Heart right ventricle (tissue), 16 donors: ENCODE measurements at regions of chr10 and their contacts with region 1.

Region 1: DNA sequence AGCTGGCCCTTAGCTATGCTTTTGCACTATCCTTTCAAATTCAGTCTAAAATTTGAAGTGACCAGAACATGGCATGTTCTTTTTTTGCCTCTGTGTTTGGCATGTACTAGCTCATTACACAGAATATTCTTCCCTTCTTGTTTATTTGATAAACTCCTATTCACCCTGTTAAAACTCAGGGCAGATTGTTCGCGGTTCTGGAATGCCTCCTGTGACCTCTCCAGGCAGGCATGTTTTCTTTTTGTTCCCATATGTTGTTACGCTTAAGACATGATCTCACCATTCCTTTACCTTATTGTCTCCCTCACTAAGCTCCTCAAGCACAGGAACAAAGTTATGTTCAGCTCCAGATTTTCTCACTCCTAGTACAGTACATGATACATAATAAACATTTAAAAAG is 181.7 kb downstream of the CCSER2 start:
- DNase-seq: no peak
- ATAC-seq: no peak
- H3K4me3 ChIP-seq: no peak overlapping the region
- H3K27ac ChIP-seq: no peak overlapping the region
- H3K4me1 ChIP-seq: no peaks in the 10 kb centered on the region
- H3K27me3 ChIP-seq: no peaks in the 10 kb centered on the region
- CTCF ChIP-seq: no peak

Region 2: GRCh38 chr10:84452003-84452402 is 58.1 kb before region 1 on chr10:
- intact Hi-C with region 1: loop called in 1 of 10 experiments (anchors 10 kb)
- DNase-seq: no peak
- ATAC-seq: no peak
- H3K4me3 ChIP-seq: no peak overlapping the region
- H3K27ac ChIP-seq: no peak overlapping the region
- H3K4me1 ChIP-seq: peaks cover 0 to 15% (median 0%) of the 10 kb centered on the region in 9 donors
- H3K27me3 ChIP-seq: no peaks in the 10 kb centered on the region
- CTCF ChIP-seq: no peak

Region 3: DNA sequence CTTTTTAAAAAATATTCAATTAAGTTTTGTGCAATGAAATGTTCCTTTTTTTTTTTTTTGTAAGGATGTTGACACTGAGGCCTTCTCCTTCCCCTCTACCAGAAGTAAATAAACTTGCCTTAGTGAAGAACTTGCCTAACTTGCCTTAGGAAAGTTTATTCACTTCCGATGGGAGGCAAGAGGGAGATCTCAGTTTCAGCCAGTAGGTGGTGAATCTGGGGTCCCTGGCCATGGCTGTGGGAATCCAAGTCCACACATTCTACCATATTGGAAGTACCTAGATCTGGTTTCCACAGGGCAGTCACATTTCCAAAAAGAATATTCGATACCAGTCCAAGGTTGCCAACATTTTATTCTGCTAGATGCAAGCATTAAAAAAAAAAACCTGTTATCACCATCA is 89.1 kb after region 1 on chr10:
- intact Hi-C with region 1: no loop called
- DNase-seq: no peak
- ATAC-seq: no peak
- H3K4me3 ChIP-seq: no peak overlapping the region
- H3K27ac ChIP-seq: no peak overlapping the region
- H3K4me1 ChIP-seq: no peaks in the 10 kb centered on the region
- H3K27me3 ChIP-seq: peaks cover 0 to 22% (median 3%) of the 10 kb centered on the region in 7 donors
- CTCF ChIP-seq: no peak